ENCODE measurements at regions of chr7 and their contacts with region 1.

Region 1: GRCh38 chr7:22103255-22103969 is 157.7 kb upstream of the CDCA7L start:
- DNase-seq: peak; percentile 2
- H3K4me3 ChIP-seq: no peak overlapping the region
- H3K27me3 ChIP-seq: peaks cover 4% of the 10 kb centered on the region; the same call in 1 of the 2 replicates
- CTCF ChIP-seq: peak; percentile 82

Region 2: GRCh38 chr7:22488643-22489462 is 385.4 kb after region 1 on chr7:
- CTCF ChIA-PET with region 1: interaction called, 89 read pairs
- POLR2A ChIA-PET with region 1: no interaction called
- DNase-seq: no peak
- H3K4me3 ChIP-seq: no peak overlapping the region
- H3K27me3 ChIP-seq: no peaks in the 10 kb centered on the region
- CTCF ChIP-seq: peak; percentile 86

Measured in BJ (cell line).